CD8-positive, alpha-beta T cell (primary cell): ENCODE measurements at regions of chr5 and their contacts with region 1.

Region 1: DNA sequence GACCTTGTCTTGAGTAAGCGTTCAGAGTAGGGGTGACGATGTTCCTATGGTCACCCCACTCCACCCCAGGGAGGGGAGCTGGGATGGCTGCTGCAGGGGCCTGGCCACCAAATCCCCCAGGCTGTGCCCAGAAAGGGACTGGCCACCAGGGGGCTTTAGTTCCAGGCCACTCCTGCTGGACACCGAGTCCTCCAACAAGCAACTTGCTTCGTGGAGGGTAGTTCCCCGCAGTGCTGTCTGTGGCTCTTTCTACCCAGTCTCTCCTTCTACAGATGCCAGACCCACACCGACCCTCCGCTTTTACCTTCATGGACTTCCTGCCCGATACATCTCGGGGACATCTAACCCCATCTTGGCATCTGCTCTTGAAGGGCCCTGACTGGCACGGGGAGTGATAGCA is 35.7 kb upstream of the GABRP start:
- DNase-seq: no peak
- ATAC-seq: no peak
- H3K4me3 ChIP-seq: no peak overlapping the region
- H3K4me3 Mint-ChIP-seq: no peak overlapping the region
- H3K27ac ChIP-seq: no peak overlapping the region
- H3K27ac Mint-ChIP-seq: no peak overlapping the region
- H3K4me1 ChIP-seq: no peaks in the 10 kb centered on the region
- H3K4me1 Mint-ChIP-seq: peaks cover 5% of the 10 kb centered on the region
- H3K27me3 ChIP-seq: no peaks in the 10 kb centered on the region
- H3K27me3 Mint-ChIP-seq: peaks cover 38% of the 10 kb centered on the region
- CTCF ChIP-seq: no peak

Region 2: GRCh38 chr5:170861837-170862766 is 114.3 kb after region 1 on chr5 and contains the start of gene RANBP17:
- CTCF ChIA-PET with region 1: no interaction called
- POLR2A ChIA-PET with region 1: no interaction called
- intact Hi-C with region 1: no loop called
- DNase-seq: peak in 3 of 9 experiments; percentile 12 to 37 (median 16)
- ATAC-seq: no peak
- H3K4me3 ChIP-seq: no peak within 1 kb of the TSS
- H3K4me3 Mint-ChIP-seq: no peak within 1 kb of the TSS
- H3K27ac ChIP-seq: no peak within 1 kb of the TSS
- H3K27ac Mint-ChIP-seq: no peak within 1 kb of the TSS
- H3K4me1 ChIP-seq: no peaks in the 10 kb centered on the region
- H3K4me1 Mint-ChIP-seq: peaks cover 7% of the 10 kb centered on the region
- H3K27me3 ChIP-seq: no peaks in the 10 kb centered on the region
- H3K27me3 Mint-ChIP-seq: peaks cover 43% of the 10 kb centered on the region
- CTCF ChIP-seq: no peak
- total RNA-seq, gene RANBP17: not detected

Region 3: DNA sequence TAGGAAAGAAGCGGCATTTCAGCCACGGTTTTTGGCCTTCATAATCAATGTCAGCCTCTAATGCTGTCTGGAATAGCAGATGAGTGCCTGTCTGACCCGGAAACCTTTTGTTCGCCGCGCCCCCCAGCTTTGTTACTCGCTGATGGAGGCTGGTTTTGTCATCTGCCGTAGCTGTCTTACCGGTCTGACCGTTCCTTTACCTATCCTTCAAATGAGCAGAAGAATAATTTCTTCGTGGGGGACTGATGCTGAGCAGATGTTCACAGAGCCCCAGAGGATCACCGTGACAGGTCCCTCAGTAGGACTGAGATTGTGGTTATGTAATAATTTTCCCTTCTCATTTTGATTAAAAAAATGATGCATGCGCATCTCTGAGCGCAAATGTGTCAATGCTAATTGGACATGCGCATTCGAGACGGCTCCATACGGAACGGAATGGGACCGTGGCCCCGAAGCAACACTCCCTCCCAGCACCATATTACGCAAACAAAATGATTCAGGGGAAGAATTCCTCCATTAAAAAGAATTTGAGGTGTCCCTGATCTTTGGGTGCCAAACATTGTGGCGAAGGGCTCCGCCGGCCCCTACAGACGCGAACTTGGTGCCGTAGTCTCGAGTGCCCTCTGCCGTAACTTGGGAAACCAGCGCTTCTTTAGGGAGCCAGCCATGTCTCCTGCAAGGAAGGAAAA is 588.8 kb after region 1 on chr5:
- CTCF ChIA-PET with region 1: interaction called, 3 read pairs
- POLR2A ChIA-PET with region 1: no interaction called
- intact Hi-C with region 1: loop called in 1 of 2 experiments (anchors 2 kb)
- DNase-seq: peak in 2 of 9 experiments; percentile 40 to 58
- ATAC-seq: no peak
- H3K4me3 ChIP-seq: peak overlapping the region; percentile 36 to 46
- H3K4me3 Mint-ChIP-seq: peak overlapping the region; percentile 66
- H3K27ac ChIP-seq: no peak overlapping the region
- H3K27ac Mint-ChIP-seq: no peak overlapping the region
- H3K4me1 ChIP-seq: no peaks in the 10 kb centered on the region
- H3K4me1 Mint-ChIP-seq: peaks cover 7% of the 10 kb centered on the region
- H3K27me3 ChIP-seq: peaks cover 0 to 2% of the 10 kb centered on the region in 2 experiments
- H3K27me3 Mint-ChIP-seq: peaks cover 35% of the 10 kb centered on the region
- CTCF ChIP-seq: no peak